ENCODE measurements at regions of chr1 and their contacts with region 1.

Region 1: GRCh38 chr1:181033799-181034451 is at the start of gene MR1:
- DNase-seq: peak; percentile 92
- ATAC-seq: peak; percentile 90
- H3K4me3 ChIP-seq: peak within 1 kb of the TSS; percentile 93
- H3K27ac ChIP-seq: peak within 1 kb of the TSS; percentile 89
- H3K4me1 ChIP-seq: peaks cover 23% of the 10 kb centered on the region
- H3K27me3 ChIP-seq: no peaks in the 10 kb centered on the region
- CTCF ChIP-seq: no peak
- EP300 ChIP-seq: no peak
- POLR2A ChIP-seq: peak; percentile 84
- RAD21 ChIP-seq: no peak
- polyA plus RNA-seq, gene MR1: 24.7 to 28.5 TPM

Region 2: GRCh38 chr1:181013144-181013543 is 20.8 kb before region 1 on chr1:
- CTCF ChIA-PET with region 1: interaction called, 6 read pairs
- POLR2A ChIA-PET with region 1: interaction called, 14 read pairs
- RAD21 ChIA-PET with region 1: interaction called, 40 read pairs
- SMC1A ChIA-PET with region 1: interaction called, 135 read pairs
- in situ Hi-C with region 1: no loop called
- intact Hi-C with region 1: no loop called
- DNase-seq: no peak
- ATAC-seq: no peak
- H3K4me3 ChIP-seq: no peak overlapping the region
- H3K27ac ChIP-seq: no peak overlapping the region
- H3K4me1 ChIP-seq: peaks cover 35% of the 10 kb centered on the region
- H3K27me3 ChIP-seq: no peaks in the 10 kb centered on the region
- CTCF ChIP-seq: no peak
- EP300 ChIP-seq: no peak
- POLR2A ChIP-seq: no peak
- RAD21 ChIP-seq: no peak

Region 3: DNA sequence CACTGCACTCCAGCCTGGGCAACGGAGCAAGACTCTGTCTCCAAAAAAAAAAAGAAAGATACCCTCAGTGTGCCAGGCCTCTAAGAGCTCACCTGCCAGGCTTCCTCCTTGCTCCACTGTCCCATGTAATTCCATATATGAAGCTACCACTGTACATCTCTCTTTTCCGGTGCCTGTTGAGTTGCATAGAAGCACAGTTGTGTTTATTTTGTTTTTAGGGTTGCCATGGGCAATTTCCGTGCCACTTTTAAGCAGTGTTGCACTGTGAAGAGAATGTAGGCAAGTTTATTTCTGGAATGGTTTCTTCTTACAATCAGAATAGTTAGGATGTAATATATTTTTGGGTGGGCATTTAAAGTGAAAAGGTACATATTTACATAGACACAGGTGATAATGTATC is 23.2 kb after region 1 on chr1:
- CTCF ChIA-PET with region 1: interaction called, 30 read pairs
- POLR2A ChIA-PET with region 1: interaction called, 4 read pairs
- RAD21 ChIA-PET with region 1: interaction called, 20 read pairs
- SMC1A ChIA-PET with region 1: interaction called, 24 read pairs
- in situ Hi-C with region 1: no loop called
- intact Hi-C with region 1: no loop called
- DNase-seq: no peak
- ATAC-seq: no peak
- H3K4me3 ChIP-seq: no peak overlapping the region
- H3K27ac ChIP-seq: no peak overlapping the region
- H3K4me1 ChIP-seq: peaks cover 12% of the 10 kb centered on the region
- H3K27me3 ChIP-seq: no peaks in the 10 kb centered on the region
- CTCF ChIP-seq: no peak
- EP300 ChIP-seq: no peak
- POLR2A ChIP-seq: no peak
- RAD21 ChIP-seq: no peak

Region 4: DNA sequence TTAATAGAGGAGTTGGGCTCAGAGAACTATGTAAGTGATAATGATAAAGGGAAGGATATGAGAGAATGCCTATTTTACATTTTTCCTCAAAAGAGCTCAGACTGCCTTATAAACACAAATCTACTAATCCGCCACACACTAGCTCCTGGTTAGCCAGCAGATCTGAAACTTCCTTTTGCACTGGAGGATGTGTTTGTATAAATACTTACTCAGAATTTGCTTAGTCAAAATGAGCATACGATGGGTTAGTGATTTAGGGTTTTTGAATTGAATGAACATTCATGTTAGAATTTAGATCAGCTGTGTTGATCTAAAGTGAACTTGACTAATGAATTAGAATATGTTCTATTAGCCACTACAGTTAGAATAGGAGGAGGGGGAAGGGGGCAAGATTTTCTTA is 45.5 kb after region 1 on chr1:
- CTCF ChIA-PET with region 1: interaction called, 86 read pairs
- POLR2A ChIA-PET with region 1: interaction called, 5 read pairs
- RAD21 ChIA-PET with region 1: interaction called, 43 read pairs
- SMC1A ChIA-PET with region 1: interaction called, 85 read pairs
- in situ Hi-C with region 1: no loop called
- intact Hi-C with region 1: no loop called
- DNase-seq: no peak
- ATAC-seq: no peak
- H3K4me3 ChIP-seq: no peak overlapping the region
- H3K27ac ChIP-seq: no peak overlapping the region
- H3K4me1 ChIP-seq: peaks cover 38% of the 10 kb centered on the region
- H3K27me3 ChIP-seq: no peaks in the 10 kb centered on the region
- CTCF ChIP-seq: no peak
- EP300 ChIP-seq: no peak
- POLR2A ChIP-seq: no peak
- RAD21 ChIP-seq: no peak

Region 5: DNA sequence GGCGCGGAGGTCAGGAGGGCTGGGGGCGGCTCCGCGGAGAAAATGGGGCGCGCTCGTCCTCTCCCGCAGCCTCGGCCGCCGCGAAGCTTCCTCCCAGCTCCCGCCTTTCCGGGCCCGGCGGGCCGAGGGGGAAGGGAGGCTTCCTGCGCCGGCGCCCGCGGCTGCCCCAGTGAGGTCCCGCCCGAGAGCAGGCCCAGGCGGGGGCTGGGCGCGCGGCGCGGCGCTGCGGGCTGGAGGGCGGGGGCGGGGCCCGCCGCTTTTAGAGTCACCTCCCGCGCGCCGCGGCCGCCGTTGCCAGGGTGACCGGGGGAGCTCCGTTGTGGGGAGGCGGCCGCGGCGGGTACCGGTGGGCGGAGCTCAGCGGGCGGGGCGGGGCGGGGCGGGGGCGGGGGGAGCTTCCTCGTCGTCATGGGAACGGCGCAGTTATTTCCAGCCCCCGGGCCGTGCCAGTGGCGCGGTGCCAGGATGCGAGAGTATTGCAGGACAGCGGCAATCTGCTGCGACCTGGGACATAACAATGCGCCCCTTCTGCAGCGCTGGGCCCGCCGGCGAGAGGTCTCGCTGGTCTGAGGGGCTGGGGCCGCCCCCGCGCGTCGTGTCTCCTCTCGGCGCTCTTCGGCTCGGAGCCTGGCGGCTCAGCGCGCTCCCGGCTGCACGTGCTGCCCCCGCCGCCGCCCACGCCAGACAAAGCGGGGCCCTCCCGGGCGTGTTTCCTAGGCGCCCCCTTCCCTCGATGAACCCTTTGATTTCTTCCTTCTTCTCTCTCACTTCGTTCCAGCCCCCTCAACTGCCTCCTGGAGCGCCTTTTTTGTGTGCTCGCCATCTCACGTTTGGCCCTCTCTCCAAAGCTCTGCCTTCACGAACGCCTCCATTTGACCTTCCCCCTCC is 71.5 kb after region 1 on chr1:
- CTCF ChIA-PET with region 1: interaction called, 10 read pairs
- POLR2A ChIA-PET with region 1: interaction called, 4 read pairs
- RAD21 ChIA-PET with region 1: interaction called, 11 read pairs
- SMC1A ChIA-PET with region 1: interaction called, 21 read pairs
- in situ Hi-C with region 1: no loop called
- intact Hi-C with region 1: no loop called
- DNase-seq: no peak
- ATAC-seq: peak; percentile 82
- H3K4me3 ChIP-seq: peak overlapping the region; percentile 94
- H3K27ac ChIP-seq: peak overlapping the region; percentile 70
- H3K4me1 ChIP-seq: peaks cover 44% of the 10 kb centered on the region
- H3K27me3 ChIP-seq: no peaks in the 10 kb centered on the region
- CTCF ChIP-seq: no peak
- EP300 ChIP-seq: no peak
- POLR2A ChIP-seq: peak; percentile 65
- RAD21 ChIP-seq: no peak

Region 6: DNA sequence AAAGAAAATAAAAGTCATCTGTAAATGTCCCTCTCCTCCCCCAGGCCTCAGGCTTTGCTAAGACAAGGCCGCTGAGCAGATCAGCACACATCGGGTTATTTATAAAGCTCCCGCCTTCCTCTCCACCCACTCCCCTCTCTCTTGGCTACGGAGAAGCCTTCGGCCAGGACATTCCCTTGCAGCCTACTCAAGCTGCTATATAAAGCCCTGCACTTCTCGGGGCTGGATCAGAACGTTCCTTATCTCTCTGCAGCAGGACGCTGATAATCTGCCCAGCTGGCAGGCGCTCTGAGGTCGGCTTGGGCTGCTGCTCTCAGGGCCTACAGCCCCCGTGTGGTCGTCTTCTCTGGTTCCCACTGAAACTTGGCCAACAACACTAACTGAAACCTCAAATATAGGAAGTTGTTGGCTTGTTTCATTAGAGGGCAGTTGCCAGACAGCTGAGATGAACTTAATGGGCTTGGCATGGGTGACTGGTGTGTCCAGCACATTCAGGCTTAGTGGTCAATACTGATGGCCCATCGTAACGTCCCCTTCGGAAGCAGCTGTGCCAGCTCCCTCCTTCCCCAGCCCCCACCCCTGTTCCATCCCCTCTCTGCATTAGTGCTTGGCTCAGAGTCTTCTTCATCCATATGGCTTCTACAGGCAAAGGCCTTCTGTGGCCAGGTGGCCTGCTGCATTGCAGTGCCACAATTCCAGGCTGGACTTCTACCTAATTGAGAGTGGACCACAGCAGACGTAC is 119.1 kb after region 1 on chr1:
- CTCF ChIA-PET with region 1: interaction called, 35 read pairs
- POLR2A ChIA-PET with region 1: interaction called, 3 read pairs
- RAD21 ChIA-PET with region 1: interaction called, 11 read pairs
- SMC1A ChIA-PET with region 1: interaction called, 12 read pairs
- in situ Hi-C with region 1: no loop called
- intact Hi-C with region 1: no loop called
- DNase-seq: no peak
- ATAC-seq: peak; percentile 88
- H3K4me3 ChIP-seq: no peak overlapping the region
- H3K27ac ChIP-seq: peak overlapping the region; percentile 62
- H3K4me1 ChIP-seq: peaks cover 48% of the 10 kb centered on the region
- H3K27me3 ChIP-seq: no peaks in the 10 kb centered on the region
- CTCF ChIP-seq: peak; percentile 19 to 40 (median 40); a peak in 4 of 6 replicates
- EP300 ChIP-seq: peak; percentile 57 to 68; a peak in 2 of 4 replicates
- POLR2A ChIP-seq: peak; percentile 61
- RAD21 ChIP-seq: peak; percentile 41; the same call in 1 of the 2 replicates

Region 7: GRCh38 chr1:182092336-182092735 is 1058.4 kb after region 1 on chr1:
- CTCF ChIA-PET with region 1: no interaction called
- POLR2A ChIA-PET with region 1: no interaction called
- RAD21 ChIA-PET with region 1: no interaction called
- SMC1A ChIA-PET with region 1: no interaction called
- in situ Hi-C with region 1: no loop called
- intact Hi-C with region 1: no loop called
- DNase-seq: no peak
- ATAC-seq: no peak
- H3K4me3 ChIP-seq: no peak overlapping the region
- H3K27ac ChIP-seq: no peak overlapping the region
- H3K4me1 ChIP-seq: no peaks in the 10 kb centered on the region
- H3K27me3 ChIP-seq: peaks cover 0 to 2% of the 10 kb centered on the region in 2 experiments; a peak in 2 of 4 replicates
- CTCF ChIP-seq: no peak
- EP300 ChIP-seq: no peak
- POLR2A ChIP-seq: no peak
- RAD21 ChIP-seq: no peak

Measured in GM12878 (cell line).